AG04449 (cell line): ENCODE measurements at regions of chr5 and their contacts with region 1.

Region 1: GRCh38 chr5:54944364-54944763 is 41.0 kb downstream of the ESM1 start:
- DNase-seq: peak; percentile 4
- H3K4me3 ChIP-seq: no peak overlapping the region
- CTCF ChIP-seq: peak; percentile 59

Region 2: DNA sequence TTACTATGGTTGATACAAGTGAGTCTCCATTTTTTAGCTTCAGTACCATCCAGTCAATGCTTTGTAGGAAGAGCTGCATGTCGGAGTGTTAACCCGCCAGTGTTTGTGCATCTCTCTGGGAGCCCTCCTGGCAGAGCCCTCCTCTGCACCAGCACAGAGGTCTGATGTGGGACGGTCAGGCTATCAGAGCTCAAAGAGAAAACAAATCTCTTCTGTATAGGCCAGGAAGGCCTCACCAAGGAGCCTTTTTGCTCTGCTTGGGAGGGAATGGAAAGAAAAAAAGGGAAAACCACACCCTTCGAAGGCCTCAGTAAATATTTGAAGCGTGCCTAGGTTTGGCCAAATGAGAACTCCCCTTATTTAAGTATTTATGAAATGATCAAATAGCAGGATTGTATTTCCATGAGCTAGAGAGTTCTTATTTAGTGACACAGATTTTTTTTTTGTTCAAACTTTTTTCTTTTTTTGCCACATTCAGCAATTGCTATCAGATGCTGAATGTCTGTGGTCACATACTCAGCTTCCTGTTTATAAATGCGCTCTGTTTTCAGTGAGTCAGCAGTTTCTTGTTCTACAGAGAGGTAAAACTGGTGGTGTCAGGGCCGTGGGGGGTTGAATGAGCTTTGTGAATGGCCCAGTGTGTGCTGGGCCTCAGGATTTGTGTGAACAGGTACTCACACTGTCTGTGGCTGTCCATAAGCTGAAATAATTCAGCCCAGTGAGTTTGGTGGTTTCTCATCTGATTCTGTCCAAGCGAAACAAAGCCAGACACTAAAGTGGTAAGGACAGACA is 200.2 kb before region 1 on chr5:
- CTCF ChIA-PET with region 1: no interaction called
- POLR2A ChIA-PET with region 1: no interaction called
- DNase-seq: peak; percentile 92
- H3K4me3 ChIP-seq: no peak overlapping the region
- CTCF ChIP-seq: no peak

Region 3: DNA sequence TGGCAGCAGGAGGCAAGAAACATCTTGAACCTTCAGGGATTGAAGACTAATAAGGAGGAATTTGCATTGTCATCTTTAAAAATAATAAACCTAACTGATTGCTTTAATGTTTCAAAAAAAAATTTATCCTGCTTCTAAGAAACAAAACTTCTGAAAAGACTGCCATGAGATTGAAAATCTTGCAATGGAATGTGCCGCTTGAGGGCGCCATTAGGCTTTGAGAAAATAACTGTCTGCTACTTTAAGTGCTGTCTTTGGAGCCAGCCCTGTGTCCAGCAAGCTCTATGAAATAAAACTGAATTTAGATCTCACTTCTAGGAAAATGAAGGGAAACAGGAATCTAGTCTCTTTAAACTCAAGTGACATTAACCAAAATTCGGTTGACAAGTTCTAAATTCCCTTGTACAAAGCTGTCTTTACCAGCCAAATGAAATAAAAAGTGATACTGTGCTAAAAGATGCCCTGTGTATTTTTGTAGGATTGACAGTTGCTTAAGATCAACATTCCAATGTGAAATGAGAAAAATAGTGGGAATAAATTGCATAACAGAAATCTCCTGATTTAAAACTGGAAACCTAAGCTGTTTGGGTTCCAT is 38.3 kb before region 1 on chr5:
- CTCF ChIA-PET with region 1: interaction called, 44 read pairs
- POLR2A ChIA-PET with region 1: no interaction called
- DNase-seq: no peak
- H3K4me3 ChIP-seq: no peak overlapping the region
- CTCF ChIP-seq: peak; percentile 54

Region 4: DNA sequence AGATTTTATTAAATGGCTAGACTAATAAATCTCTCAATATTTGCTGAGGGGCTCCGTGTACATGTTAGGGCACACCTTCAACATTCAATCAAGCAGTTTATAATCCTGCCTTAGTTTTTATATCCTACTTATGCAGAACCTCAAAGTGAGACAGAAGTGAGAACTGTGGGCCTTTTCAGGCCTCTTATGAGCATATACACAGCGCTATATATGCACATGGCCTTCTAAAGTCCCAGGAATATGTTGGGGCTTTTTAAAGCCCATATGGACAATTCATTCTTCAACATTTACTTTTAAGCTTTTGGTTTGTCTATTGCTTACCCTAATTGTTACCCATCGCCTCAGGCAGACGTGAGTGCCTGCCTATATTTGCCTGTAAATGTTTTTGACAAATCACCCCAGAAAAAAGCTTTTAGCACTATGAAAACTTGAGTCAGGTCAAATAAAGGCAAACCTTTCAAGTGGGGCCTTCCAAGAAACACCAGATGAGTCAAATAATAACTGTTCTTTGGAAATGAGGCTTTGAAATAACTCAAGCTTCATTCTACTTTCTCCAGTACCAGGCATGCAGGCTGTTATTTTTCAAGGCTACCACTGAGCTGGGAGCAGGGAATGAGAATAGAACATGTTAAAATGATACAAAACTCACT is 17.1 kb before region 1 on chr5:
- CTCF ChIA-PET with region 1: interaction called, 50 read pairs
- POLR2A ChIA-PET with region 1: no interaction called
- DNase-seq: no peak
- H3K4me3 ChIP-seq: no peak overlapping the region
- CTCF ChIP-seq: no peak

Region 5: GRCh38 chr5:54969856-54970828 is 25.8 kb after region 1 on chr5:
- CTCF ChIA-PET with region 1: interaction called, 20 read pairs
- POLR2A ChIA-PET with region 1: no interaction called
- DNase-seq: no peak
- H3K4me3 ChIP-seq: no peak overlapping the region
- CTCF ChIP-seq: no peak

Region 6: GRCh38 chr5:55037046-55037771 is 92.8 kb after region 1 on chr5:
- CTCF ChIA-PET with region 1: interaction called, 12 read pairs
- POLR2A ChIA-PET with region 1: no interaction called
- DNase-seq: no peak
- H3K4me3 ChIP-seq: no peak overlapping the region
- CTCF ChIP-seq: no peak

Region 7: DNA sequence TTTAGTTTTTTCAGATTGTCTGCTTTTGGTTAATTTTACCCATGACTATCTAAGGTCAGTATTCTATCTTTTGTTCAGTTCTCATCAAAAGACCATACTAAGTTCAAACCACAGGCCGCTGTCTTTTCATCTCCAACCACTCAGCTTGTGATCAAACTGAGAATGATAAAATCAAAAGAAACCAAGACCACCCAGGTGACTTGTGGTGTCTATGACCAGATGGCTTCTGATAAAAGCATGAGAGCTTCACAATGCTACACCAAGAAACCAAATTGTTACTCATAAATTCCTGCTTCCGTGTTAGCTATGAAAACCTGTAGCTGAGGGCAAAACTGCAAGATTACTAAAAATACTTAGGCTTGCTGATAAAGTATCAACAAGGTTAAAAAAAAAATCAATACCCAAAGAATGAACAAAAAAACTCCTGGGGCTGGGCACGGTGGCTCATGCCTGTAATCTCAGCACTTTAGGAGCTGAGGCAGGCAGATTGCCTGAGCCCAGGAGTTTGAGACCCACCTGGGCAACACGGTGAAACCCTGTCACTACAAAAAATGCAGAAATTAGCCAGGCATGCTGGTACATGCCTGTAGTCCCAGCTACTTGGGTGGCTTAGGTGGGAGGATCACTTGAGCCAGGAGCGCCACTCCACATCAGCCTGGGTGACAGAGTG is 189.8 kb after region 1 on chr5:
- CTCF ChIA-PET with region 1: interaction called, 71 read pairs
- POLR2A ChIA-PET with region 1: no interaction called
- DNase-seq: no peak
- H3K4me3 ChIP-seq: no peak overlapping the region
- CTCF ChIP-seq: no peak

Region 8: GRCh38 chr5:55151923-55152842 is 207.8 kb after region 1 on chr5:
- CTCF ChIA-PET with region 1: interaction called, 39 read pairs
- POLR2A ChIA-PET with region 1: no interaction called
- DNase-seq: peak; percentile 29
- H3K4me3 ChIP-seq: no peak overlapping the region
- CTCF ChIP-seq: no peak